Activated T-helper 1 cell treated with anti-CD3 and anti-CD28 coated beads, Interleukin-12 subunit alpha, Interleukin-12 subunit beta, Interleukin-2, Interleukin-4 antibody, amounts not matched to agents 30 ng/mL and 10 ng/mL and 1 ng/mL, durations not matched to agents 14 hours and 24 hours and 36 hours (primary cell): ENCODE measurements at regions of chr15 and their contacts with region 1.

Region 1: DNA sequence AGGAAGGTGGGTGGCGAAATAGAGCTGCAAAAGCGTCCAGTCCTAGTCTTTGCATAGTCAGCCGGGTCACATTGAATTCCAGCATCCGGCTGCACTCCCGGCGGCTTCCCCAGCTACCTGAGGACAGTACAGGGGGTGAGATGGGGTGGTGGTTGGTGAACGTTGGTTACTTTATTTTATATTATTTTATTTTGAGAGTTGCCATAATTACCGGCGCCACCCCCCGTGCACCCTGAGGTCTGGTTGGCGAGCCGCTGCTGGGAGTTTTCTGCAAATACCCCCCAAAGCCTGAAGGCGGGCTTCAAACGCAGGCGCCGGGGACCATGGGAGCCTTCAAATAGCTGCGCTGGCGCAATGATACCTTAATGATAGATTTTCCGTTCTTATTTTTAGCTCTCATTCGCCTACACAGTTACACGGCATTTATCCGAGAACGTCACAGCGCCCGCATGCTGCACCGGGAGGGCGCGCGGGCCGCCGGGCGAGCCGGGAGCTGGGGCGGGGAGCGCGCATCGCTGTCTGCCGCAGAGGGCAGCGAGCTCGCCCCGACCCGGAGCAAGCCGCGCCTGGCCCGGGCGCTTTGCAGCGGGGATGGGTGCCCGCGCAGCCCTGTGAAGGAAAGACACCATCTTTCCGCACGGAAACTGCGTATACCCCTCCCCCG is 756 bp upstream of the RASGRF1 start:
- DNase-seq: no peak
- H3K4me3 Mint-ChIP-seq: no peak overlapping the region
- H3K27ac Mint-ChIP-seq: no peak overlapping the region
- H3K4me1 Mint-ChIP-seq: no peaks in the 10 kb centered on the region
- H3K27me3 Mint-ChIP-seq: peaks cover 50% of the 10 kb centered on the region

Region 2: DNA sequence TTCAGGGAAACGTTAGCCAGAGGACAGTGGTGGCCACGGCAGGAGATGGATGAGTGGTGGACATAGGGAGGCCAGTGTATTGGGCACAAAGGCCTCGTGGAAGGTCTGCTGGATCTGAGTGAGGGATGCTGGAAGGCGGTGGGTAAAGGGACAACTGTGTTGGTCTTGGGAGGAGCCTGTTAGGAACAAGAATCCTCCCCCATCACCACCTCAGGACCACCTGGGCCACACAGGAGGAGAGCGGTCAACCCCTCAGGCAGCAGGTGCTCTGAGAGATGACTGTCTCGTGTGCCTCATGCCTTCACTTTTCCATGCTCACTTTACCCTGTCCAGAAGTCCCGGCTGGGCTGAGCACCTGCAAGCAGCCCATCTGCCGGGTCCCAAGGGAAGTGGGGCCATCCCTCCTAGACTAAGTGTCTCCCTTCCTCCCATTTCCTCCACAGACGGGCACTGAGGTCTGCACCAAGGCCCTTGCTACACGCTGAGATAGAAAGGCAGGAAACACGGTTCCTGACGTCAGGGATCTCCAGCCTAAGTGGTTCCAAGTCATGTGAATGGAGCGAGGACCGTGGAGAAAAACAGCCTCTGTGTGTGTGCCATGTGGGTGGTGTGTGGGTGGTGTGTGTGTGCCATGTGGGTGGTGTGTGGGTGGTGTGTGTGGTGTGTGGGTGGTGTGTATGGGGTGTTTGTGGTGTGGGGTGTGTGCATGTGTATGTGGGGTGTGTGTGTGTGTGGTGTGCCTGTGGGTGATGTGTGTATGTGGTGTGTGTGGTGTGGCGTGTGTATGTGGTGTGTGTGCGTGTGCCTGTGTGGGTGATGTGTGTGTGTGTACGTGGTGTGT is 98.7 kb before region 1 on chr15:
- intact Hi-C with region 1: no loop called
- DNase-seq: no peak
- H3K4me3 Mint-ChIP-seq: no peak overlapping the region
- H3K27ac Mint-ChIP-seq: peak overlapping the region; percentile 61
- H3K4me1 Mint-ChIP-seq: peaks cover 19% of the 10 kb centered on the region
- H3K27me3 Mint-ChIP-seq: peaks cover 10% of the 10 kb centered on the region

Region 3: GRCh38 chr15:79067072-79067833 is 24.1 kb before region 1 on chr15:
- intact Hi-C with region 1: loop called (anchors 1 kb)
- DNase-seq: no peak
- H3K4me3 Mint-ChIP-seq: no peak overlapping the region
- H3K27ac Mint-ChIP-seq: no peak overlapping the region
- H3K4me1 Mint-ChIP-seq: no peaks in the 10 kb centered on the region
- H3K27me3 Mint-ChIP-seq: peaks cover 8% of the 10 kb centered on the region

Region 4: DNA sequence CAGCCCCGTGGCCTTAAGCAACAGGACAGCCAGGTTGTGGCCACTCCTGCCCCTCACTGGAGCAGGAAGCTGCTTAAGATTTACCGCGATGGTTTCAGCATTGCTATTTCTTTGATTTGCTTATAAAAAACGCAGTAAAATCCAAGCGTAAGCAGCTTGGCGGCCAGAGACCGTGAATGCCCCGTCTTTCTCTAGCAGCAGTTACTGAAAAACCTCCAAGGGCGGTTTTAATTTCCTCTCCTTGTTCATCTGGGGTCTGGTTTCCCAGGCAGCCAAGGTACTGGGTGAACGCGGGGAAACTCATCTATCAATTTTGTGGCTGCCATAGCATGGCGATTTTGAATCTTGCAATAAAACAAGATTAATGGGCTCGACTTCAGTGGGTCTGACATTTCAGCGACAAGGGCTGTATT is 471.1 kb after region 1 on chr15:
- intact Hi-C with region 1: loop called (anchors 5 kb)
- DNase-seq: no peak
- H3K4me3 Mint-ChIP-seq: no peak overlapping the region
- H3K27ac Mint-ChIP-seq: no peak overlapping the region
- H3K4me1 Mint-ChIP-seq: no peaks in the 10 kb centered on the region
- H3K27me3 Mint-ChIP-seq: peaks cover 10% of the 10 kb centered on the region